Esophagus muscularis mucosa (tissue), 4 donors: ENCODE measurements at regions of chr13 and their contacts with region 1.

Region 1: GRCh38 chr13:98445340-98446233 is 131.3 kb downstream of the STK24 start:
- DNase-seq: no peak
- H3K4me3 ChIP-seq: no peak overlapping the region
- H3K27ac ChIP-seq: peak overlapping the region; percentile 48 to 69 (median 62)
- H3K4me1 ChIP-seq: peaks cover 23 to 41% (median 33%) of the 10 kb centered on the region in 4 donors
- H3K27me3 ChIP-seq: no peaks in the 10 kb centered on the region
- CTCF ChIP-seq: peak; percentile 95 to 100 (median 96)
- EP300 ChIP-seq: no peak
- POLR2A ChIP-seq: no peak

Region 2: DNA sequence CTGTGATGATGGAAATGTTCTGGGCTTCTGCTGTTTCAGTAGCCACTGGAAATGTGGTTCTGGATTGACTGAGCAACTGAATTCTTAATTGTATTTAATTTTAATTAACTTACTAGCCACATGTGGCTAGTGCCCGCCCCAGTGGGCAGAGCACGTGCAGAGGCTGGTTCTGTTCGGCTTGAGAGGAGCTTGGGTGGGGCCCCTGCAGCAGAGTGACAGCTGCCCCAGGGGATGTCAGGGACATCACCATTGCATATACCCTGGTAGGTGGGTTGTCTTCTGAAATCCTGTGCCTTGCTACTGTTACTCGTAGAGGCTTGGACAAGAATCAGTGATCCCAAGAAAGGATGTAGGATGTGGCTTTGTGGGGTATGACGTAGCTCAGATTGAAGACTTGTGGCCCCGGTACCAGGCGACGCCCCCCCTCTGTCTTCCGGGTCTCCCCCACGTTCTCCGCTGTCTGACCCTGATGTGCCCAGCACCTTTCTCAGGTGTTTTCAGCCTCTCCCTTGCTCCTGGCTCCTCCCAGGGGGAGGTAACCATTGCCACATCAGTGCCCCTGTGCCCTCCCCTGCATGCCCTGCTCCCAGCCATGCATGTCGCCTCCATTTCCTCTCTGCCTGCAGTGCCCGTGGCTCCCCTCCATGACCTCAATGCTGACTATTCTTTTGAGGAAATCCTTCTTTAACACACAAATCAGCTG is 166.0 kb before region 1 on chr13:
- intact Hi-C with region 1: no loop called
- DNase-seq: no peak
- H3K4me3 ChIP-seq: no peak overlapping the region
- H3K27ac ChIP-seq: no peak overlapping the region
- H3K4me1 ChIP-seq: peaks cover 0 to 19% (median 16%) of the 10 kb centered on the region in 4 donors
- H3K27me3 ChIP-seq: no peaks in the 10 kb centered on the region
- CTCF ChIP-seq: no peak
- EP300 ChIP-seq: no peak
- POLR2A ChIP-seq: no peak

Region 3: GRCh38 chr13:98653463-98653985 is 207.9 kb after region 1 on chr13:
- intact Hi-C with region 1: loop called (anchors 1 kb)
- DNase-seq: no peak
- H3K4me3 ChIP-seq: no peak overlapping the region
- H3K27ac ChIP-seq: no peak overlapping the region
- H3K4me1 ChIP-seq: peaks cover 2 to 8% (median 7%) of the 10 kb centered on the region in 4 donors
- H3K27me3 ChIP-seq: no peaks in the 10 kb centered on the region
- CTCF ChIP-seq: peak; percentile 88 to 94 (median 91)
- EP300 ChIP-seq: no peak
- POLR2A ChIP-seq: no peak

Region 4: GRCh38 chr13:98672944-98673545 is 227.5 kb after region 1 on chr13:
- intact Hi-C with region 1: loop called (anchors 5 kb)
- DNase-seq: no peak
- H3K4me3 ChIP-seq: peak overlapping the region in 1 of 4 donors; percentile 12
- H3K27ac ChIP-seq: no peak overlapping the region
- H3K4me1 ChIP-seq: peaks cover 8 to 13% (median 8%) of the 10 kb centered on the region in 4 donors
- H3K27me3 ChIP-seq: no peaks in the 10 kb centered on the region
- CTCF ChIP-seq: peak; percentile 82 to 88 (median 83)
- EP300 ChIP-seq: no peak
- POLR2A ChIP-seq: no peak

Region 5: DNA sequence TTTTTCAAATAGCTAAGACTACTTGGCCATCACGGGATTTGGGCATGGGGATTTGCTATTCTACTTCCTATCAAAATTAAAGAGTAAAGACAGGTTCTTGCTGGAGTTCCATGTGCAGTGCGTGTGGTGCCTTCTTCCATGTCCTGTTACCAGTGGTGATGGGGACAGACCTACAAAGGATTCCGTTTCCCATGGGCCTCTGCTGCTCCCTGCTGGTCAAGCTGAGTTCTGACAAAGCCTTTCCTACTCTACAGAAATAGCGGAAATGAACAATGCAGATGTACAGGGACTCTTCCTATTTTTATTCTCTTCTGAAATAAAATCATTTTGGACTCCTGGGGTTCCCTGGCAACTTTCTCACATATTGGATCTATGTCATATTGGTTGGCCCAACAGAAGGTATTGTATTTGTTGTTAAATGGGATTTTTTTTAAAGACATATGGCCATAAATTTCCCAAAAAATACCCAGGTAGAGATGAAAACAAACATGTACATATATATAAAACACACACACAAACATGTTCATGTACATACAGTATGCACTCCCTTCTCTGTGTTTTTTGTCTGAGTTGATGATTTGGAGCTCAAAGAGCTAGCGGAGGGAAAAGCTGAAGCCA is 397.4 kb after region 1 on chr13:
- intact Hi-C with region 1: loop called (anchors 5 kb)
- DNase-seq: peak; percentile 91
- H3K4me3 ChIP-seq: no peak overlapping the region
- H3K27ac ChIP-seq: no peak overlapping the region
- H3K4me1 ChIP-seq: peaks cover 10 to 36% (median 26%) of the 10 kb centered on the region in 4 donors
- H3K27me3 ChIP-seq: no peaks in the 10 kb centered on the region
- CTCF ChIP-seq: peak; percentile 74 to 92 (median 79)
- EP300 ChIP-seq: no peak
- POLR2A ChIP-seq: no peak